ENCODE measurements at regions of chr7 and their contacts with region 1.

Region 1: GRCh38 chr7:24812310-24812945 is 55.2 kb upstream of the GSDME start:
- DNase-seq: peak; percentile 19 to 65 (median 58)
- H3K4me3 ChIP-seq: no peak overlapping the region
- H3K27ac ChIP-seq: no peak overlapping the region
- H3K4me1 ChIP-seq: no peaks in the 10 kb centered on the region
- H3K27me3 ChIP-seq: no peaks in the 10 kb centered on the region
- CTCF ChIP-seq: peak; percentile 55 to 82 (median 67)
- EP300 ChIP-seq: no peak
- POLR2A ChIP-seq: no peak

Region 2: GRCh38 chr7:24851786-24852185 is 39.4 kb after region 1 on chr7:
- intact Hi-C with region 1: no loop called
- DNase-seq: no peak
- H3K4me3 ChIP-seq: no peak overlapping the region
- H3K27ac ChIP-seq: no peak overlapping the region
- H3K4me1 ChIP-seq: no peaks in the 10 kb centered on the region
- H3K27me3 ChIP-seq: no peaks in the 10 kb centered on the region
- CTCF ChIP-seq: no peak
- EP300 ChIP-seq: no peak
- POLR2A ChIP-seq: no peak

Region 3: DNA sequence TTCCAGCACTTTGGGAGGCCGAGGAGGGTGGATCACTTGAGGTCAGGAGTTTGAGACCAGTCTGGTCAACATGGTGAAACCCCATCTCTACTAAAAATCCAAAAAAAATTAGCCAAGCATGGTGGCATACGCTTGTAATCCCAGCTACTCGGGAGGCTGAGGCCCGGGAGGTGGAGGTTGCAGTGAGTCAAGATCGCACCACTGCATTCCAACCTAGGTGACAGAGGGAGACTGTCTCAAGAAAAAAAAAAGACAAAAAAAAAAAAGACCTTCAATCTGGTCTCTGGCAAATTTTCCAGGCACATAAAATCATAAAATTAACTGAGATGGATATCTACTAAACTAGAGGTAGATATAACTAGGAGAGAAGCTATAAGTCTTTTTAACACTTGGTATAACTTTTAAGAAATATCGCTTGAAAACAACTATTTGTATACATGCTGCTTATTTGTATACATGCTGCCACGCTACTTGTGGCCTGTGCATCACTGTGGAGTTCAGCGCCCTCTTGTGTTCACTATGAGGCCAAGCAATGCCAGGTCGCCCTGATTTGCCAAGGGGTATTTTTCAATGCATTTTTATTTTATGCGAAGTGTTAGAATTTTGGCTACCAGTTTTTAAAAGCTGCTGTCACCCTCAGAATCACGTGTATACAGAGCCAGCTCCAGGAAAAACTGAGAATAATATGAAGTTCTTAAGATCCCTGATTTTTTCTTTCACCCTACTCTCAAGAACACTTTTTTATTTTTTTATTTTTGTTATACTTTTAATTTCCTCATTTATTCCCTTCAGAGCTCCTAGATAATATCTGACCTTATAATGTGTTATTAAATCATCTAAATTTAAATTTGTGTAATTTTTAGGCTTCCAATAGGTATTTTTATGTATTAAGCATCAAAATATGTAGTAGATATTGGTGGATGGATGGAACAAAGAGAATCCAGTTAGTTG is 285.9 kb after region 1 on chr7:
- intact Hi-C with region 1: loop called in 1 of 4 experiments (anchors 5 kb)
- DNase-seq: peak in 4 of 5 donors; percentile 33 to 57 (median 44)
- H3K4me3 ChIP-seq: no peak overlapping the region
- H3K27ac ChIP-seq: no peak overlapping the region
- H3K4me1 ChIP-seq: no peaks in the 10 kb centered on the region
- H3K27me3 ChIP-seq: no peaks in the 10 kb centered on the region
- CTCF ChIP-seq: peak; percentile 48 to 70 (median 67)
- EP300 ChIP-seq: no peak
- POLR2A ChIP-seq: no peak